ENCODE measurements at regions of chr6 and their contacts with region 1.

Region 1: GRCh38 chr6:154370545-154370944 is 13.9 kb upstream of the IPCEF1 start:
- DNase-seq: no peak
- H3K4me3 ChIP-seq: no peak overlapping the region
- CTCF ChIP-seq: peak; percentile 51

Region 2: GRCh38 chr6:154156135-154156896 is 214.2 kb before region 1 on chr6:
- CTCF ChIA-PET with region 1: interaction called, 36 read pairs
- POLR2A ChIA-PET with region 1: no interaction called
- DNase-seq: no peak
- H3K4me3 ChIP-seq: no peak overlapping the region
- CTCF ChIP-seq: peak; percentile 80

Region 3: GRCh38 chr6:154301839-154302752 is 68.4 kb before region 1 on chr6:
- CTCF ChIA-PET with region 1: no interaction called
- POLR2A ChIA-PET with region 1: no interaction called
- DNase-seq: peak; percentile 50
- H3K4me3 ChIP-seq: no peak overlapping the region
- CTCF ChIP-seq: no peak

Region 4: DNA sequence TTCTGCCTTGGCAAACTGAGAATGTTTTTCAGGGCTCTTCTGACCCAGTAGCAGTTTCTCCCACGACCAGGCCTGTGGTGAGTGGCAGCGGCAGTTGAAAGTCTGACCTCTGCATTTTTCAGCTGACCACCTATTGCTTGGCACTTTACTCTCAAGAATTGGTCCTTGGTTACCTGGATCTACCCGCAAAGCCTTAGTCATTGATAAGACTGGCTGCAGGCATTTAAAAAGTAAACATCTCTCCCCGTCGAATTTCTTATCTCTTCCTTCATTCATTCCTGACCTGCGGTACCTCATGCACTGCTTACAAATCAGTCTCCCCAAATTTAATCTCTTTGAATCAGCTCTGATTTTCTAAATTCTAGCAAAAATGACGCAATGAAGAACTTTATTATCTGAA is 12.2 kb after region 1 on chr6:
- CTCF ChIA-PET with region 1: interaction called, 10 read pairs
- POLR2A ChIA-PET with region 1: no interaction called
- DNase-seq: no peak
- H3K4me3 ChIP-seq: no peak overlapping the region
- CTCF ChIP-seq: no peak

Measured in AG04449 (cell line).